ENCODE measurements at regions of chrX and their contacts with region 1.

Region 1: DNA sequence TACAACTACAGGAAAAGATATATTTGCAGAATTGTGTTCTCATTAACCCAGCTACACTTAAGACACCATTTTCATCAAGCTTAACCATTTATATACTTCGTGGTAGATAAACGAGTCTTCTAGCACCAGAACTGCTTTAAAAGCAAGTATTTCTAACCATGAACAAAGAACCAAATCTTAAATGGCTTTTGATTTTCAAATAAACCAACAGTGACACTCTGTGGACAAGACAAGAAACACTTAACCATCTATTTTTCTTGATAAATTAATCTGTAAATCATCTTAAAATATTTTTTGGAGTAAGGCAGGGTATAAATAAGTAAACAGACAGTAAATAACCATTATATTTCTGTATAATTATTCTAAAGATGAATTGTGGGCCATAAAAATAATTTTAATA is 10.2 kb downstream of the BEND2 start:
- DNase-seq: no peak
- ATAC-seq: no peak

Region 2: DNA sequence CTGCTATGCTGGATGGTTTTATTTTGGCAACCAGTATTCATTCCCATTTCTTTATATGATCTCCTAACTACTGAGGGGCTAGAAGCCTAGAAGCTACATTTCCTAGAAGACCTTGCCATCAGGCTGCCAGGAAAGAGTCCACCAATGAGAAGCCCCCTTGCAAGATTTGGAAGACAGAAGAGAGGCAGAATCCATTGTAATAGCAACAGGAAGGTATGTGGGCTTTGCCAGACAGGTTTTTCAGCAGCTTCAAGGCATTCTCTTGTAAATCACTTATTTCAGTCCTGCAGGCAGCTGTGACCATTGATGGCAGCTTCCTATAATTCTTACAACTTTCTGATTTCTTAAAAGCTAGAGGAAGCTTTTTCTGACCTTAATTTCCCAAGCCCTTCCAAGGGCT is 983.7 kb before region 1 on chrX:
- intact Hi-C with region 1: no loop called
- DNase-seq: no peak
- ATAC-seq: no peak

Region 3: DNA sequence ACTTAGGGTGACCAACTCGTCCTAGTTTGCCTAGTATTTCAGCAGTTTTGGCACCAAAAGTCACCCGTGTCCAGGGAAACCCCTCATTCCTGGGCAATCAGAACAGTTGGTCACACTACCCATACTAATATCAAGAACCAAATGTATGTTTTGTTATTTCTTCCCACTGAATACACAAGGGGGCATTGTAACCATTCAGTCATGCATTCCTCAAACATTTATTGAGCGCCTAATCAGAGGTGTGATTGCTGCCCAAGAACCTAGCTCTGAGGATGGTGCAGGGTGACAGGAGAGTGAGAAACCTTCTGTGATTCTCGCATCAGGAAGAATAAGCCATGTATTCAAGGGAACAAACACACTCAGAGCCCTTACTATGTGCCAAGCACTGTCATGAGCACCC is 279.6 kb before region 1 on chrX:
- intact Hi-C with region 1: loop called in 1 of 2 experiments (anchors 5 kb)
- DNase-seq: no peak
- ATAC-seq: no peak

Region 4: GRCh38 chrX:18290200-18290599 is 79.7 kb after region 1 on chrX:
- intact Hi-C with region 1: no loop called
- DNase-seq: no peak
- ATAC-seq: no peak